ENCODE measurements at regions of chr6 and their contacts with region 1.

Region 1: GRCh38 chr6:106360410-106360988 is at the start of gene CRYBG1:
- DNase-seq: peak; percentile 55
- H3K4me3 Mint-ChIP-seq: peak within 1 kb of the TSS; percentile 64
- H3K27ac Mint-ChIP-seq: no peak within 1 kb of the TSS
- H3K4me1 Mint-ChIP-seq: peaks cover 13% of the 10 kb centered on the region
- H3K27me3 Mint-ChIP-seq: peaks cover 55% of the 10 kb centered on the region
- total RNA-seq, gene CRYBG1: 41.1 to 46.8 TPM

Region 2: GRCh38 chr6:105964979-105965760 is 395.3 kb before region 1 on chr6:
- CTCF ChIA-PET with region 1: no interaction called
- POLR2A ChIA-PET with region 1: no interaction called
- DNase-seq: no peak
- H3K4me3 Mint-ChIP-seq: no peak overlapping the region
- H3K27ac Mint-ChIP-seq: peak overlapping the region; percentile 1
- H3K4me1 Mint-ChIP-seq: peaks cover 2% of the 10 kb centered on the region
- H3K27me3 Mint-ChIP-seq: peaks cover 12% of the 10 kb centered on the region

Region 3: GRCh38 chr6:106347341-106347740 is 13.2 kb before region 1 on chr6:
- CTCF ChIA-PET with region 1: interaction called, 11 read pairs
- POLR2A ChIA-PET with region 1: no interaction called
- DNase-seq: no peak
- H3K4me3 Mint-ChIP-seq: no peak overlapping the region
- H3K27ac Mint-ChIP-seq: no peak overlapping the region
- H3K4me1 Mint-ChIP-seq: no peaks in the 10 kb centered on the region
- H3K27me3 Mint-ChIP-seq: peaks cover 27% of the 10 kb centered on the region

Region 4: GRCh38 chr6:106370639-106371038 is 10.1 kb after region 1 on chr6:
- CTCF ChIA-PET with region 1: interaction called, 10 read pairs
- POLR2A ChIA-PET with region 1: no interaction called
- DNase-seq: no peak
- H3K4me3 Mint-ChIP-seq: no peak overlapping the region
- H3K27ac Mint-ChIP-seq: no peak overlapping the region
- H3K4me1 Mint-ChIP-seq: peaks cover 13% of the 10 kb centered on the region
- H3K27me3 Mint-ChIP-seq: peaks cover 7% of the 10 kb centered on the region

Region 5: GRCh38 chr6:106546691-106547414 is 186.4 kb after region 1 on chr6:
- CTCF ChIA-PET with region 1: no interaction called
- POLR2A ChIA-PET with region 1: no interaction called
- DNase-seq: no peak
- H3K4me3 Mint-ChIP-seq: no peak overlapping the region
- H3K27ac Mint-ChIP-seq: peak overlapping the region; percentile 11
- H3K4me1 Mint-ChIP-seq: peaks cover 31% of the 10 kb centered on the region
- H3K27me3 Mint-ChIP-seq: no peaks in the 10 kb centered on the region

Measured in activated CD4-positive, alpha-beta T cell treated with anti-CD3 and anti-CD28 coated beads, Interleukin-2, amount 10 ng/mL, durations not matched to agents 7 days and 5 days (primary cell).